PC-3 (cell line): ENCODE measurements at regions of chr9 and their contacts with region 1.

Region 1: GRCh38 chr9:108478431-108478837 is 377.4 kb downstream of the ACTL7B start:
- DNase-seq: peak; percentile 85
- ATAC-seq: peak; percentile 45
- H3K4me3 ChIP-seq: peak overlapping the region; percentile 40
- H3K27ac ChIP-seq: peak overlapping the region; percentile 99
- H3K4me1 ChIP-seq: peaks cover 60% of the 10 kb centered on the region
- H3K27me3 ChIP-seq: no peaks in the 10 kb centered on the region
- CTCF ChIP-seq: no peak; the same call in 1 of the 2 replicates

Region 2: DNA sequence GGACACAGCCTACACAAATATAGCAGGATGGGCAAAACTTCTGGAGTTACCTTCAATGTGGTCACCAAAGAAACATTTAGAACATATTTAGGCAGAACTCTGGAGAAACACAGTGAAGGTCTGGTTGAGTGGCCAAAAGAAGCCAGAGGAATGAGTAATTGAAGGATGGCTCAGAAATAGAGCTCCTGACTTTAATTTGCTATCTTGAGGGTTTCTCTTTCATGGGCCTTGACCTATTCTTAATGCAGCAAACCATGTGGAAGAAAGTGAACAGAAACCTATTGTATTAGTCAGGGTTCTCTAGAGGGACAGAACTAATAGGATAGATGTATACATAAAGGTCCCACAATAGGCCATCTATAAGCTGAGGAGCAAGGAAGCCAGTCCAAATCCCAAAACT is 273.2 kb before region 1 on chr9:
- CTCF ChIA-PET with region 1: no interaction called
- POLR2A ChIA-PET with region 1: no interaction called
- intact Hi-C with region 1: no loop called
- DNase-seq: no peak
- ATAC-seq: no peak
- H3K4me3 ChIP-seq: no peak overlapping the region
- H3K27ac ChIP-seq: no peak overlapping the region
- H3K4me1 ChIP-seq: no peaks in the 10 kb centered on the region
- H3K27me3 ChIP-seq: no peaks in the 10 kb centered on the region
- CTCF ChIP-seq: no peak

Region 3: GRCh38 chr9:108444400-108445358 is 33.8 kb before region 1 on chr9:
- CTCF ChIA-PET with region 1: no interaction called
- POLR2A ChIA-PET with region 1: no interaction called
- intact Hi-C with region 1: loop called (anchors 1 kb)
- DNase-seq: peak; percentile 91
- ATAC-seq: peak; percentile 84
- H3K4me3 ChIP-seq: peak overlapping the region; percentile 56
- H3K27ac ChIP-seq: peak overlapping the region; percentile 98
- H3K4me1 ChIP-seq: peaks cover 45% of the 10 kb centered on the region
- H3K27me3 ChIP-seq: no peaks in the 10 kb centered on the region
- CTCF ChIP-seq: no peak

Region 4: DNA sequence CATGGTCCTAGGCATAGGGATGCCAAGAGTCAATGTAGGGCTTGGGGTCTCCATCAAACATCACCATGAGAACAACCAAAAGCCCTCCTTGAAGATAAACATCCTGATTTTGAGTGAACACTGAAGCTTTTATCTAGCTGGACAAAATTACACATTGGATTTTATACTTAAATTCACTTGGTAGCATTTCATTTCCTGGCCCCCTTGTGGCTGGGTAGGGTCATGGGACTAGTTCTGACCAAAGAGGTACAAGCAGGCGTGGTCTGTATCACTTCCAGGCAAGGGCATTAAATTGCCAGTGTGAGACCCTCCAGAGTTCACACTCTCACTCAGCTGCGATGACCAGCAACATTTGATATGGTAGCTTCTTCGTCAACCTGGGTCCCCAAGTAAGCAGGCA is 57.1 kb after region 1 on chr9:
- CTCF ChIA-PET with region 1: no interaction called
- POLR2A ChIA-PET with region 1: no interaction called
- intact Hi-C with region 1: no loop called
- DNase-seq: no peak
- ATAC-seq: no peak
- H3K4me3 ChIP-seq: no peak overlapping the region
- H3K27ac ChIP-seq: peak overlapping the region; percentile 95
- H3K4me1 ChIP-seq: peaks cover 21% of the 10 kb centered on the region
- H3K27me3 ChIP-seq: no peaks in the 10 kb centered on the region
- CTCF ChIP-seq: peak; percentile 54

Region 5: GRCh38 chr9:108551030-108551838 is 72.8 kb after region 1 on chr9:
- CTCF ChIA-PET with region 1: interaction called, 5 read pairs
- POLR2A ChIA-PET with region 1: no interaction called
- intact Hi-C with region 1: loop called (anchors 1 kb)
- DNase-seq: peak; percentile 91
- ATAC-seq: peak; percentile 91
- H3K4me3 ChIP-seq: peak overlapping the region; percentile 20; the same call in 1 of the 2 replicates
- H3K27ac ChIP-seq: peak overlapping the region; percentile 99
- H3K4me1 ChIP-seq: peaks cover 57% of the 10 kb centered on the region
- H3K27me3 ChIP-seq: no peaks in the 10 kb centered on the region
- CTCF ChIP-seq: no peak